ENCODE measurements at regions of chr10 and their contacts with region 1.

Region 1: GRCh38 chr10:86399879-86400704 is 33.5 kb upstream of the GRID1 start:
- DNase-seq: no peak
- H3K4me3 ChIP-seq: peak overlapping the region; percentile 52 to 60
- H3K27ac ChIP-seq: peak overlapping the region; percentile 82
- H3K4me1 ChIP-seq: peaks cover 33% of the 10 kb centered on the region
- H3K27me3 ChIP-seq: no peaks in the 10 kb centered on the region
- CTCF ChIP-seq: peak; percentile 88 to 95 (median 95)
- POLR2A ChIP-seq: no peak

Region 2: DNA sequence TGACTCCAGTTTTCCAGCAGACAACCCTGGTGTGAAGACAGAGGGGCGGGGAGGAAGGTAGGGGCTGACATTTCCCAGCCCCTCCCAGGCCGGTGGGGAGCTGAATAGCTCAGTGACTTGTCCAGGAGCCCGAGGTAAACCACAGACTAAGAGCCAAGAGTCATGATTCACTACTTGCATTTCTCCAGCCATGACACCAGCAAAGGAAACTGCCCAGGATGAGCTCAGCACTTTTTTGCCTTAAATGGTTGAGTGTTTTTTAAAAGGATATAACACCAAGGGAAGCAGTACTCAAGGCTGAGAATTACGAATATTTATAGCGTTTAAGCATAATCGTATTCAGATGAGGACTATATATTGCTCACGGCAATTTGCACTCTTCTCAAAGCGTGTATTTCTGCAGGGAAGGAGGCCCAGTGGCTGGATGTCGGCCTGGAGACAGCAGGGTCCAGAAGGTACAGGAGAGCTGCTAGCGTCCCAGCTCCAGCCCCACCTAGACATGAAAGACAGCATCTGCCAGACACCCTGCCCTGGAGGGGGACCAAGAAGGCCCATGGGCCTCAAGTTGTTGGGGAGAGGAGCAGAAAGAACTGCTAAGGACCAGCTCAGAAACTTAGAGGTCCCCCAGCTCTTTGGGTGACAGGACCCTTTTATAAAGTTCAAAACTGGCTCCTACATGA is 174.8 kb before region 1 on chr10:
- intact Hi-C with region 1: no loop called
- DNase-seq: no peak
- H3K4me3 ChIP-seq: no peak overlapping the region
- H3K27ac ChIP-seq: no peak overlapping the region
- H3K4me1 ChIP-seq: no peaks in the 10 kb centered on the region
- H3K27me3 ChIP-seq: no peaks in the 10 kb centered on the region
- CTCF ChIP-seq: no peak
- POLR2A ChIP-seq: no peak

Region 3: GRCh38 chr10:86321568-86321967 is 78.5 kb before region 1 on chr10:
- intact Hi-C with region 1: no loop called
- DNase-seq: no peak
- H3K4me3 ChIP-seq: no peak overlapping the region
- H3K27ac ChIP-seq: no peak overlapping the region
- H3K4me1 ChIP-seq: no peaks in the 10 kb centered on the region
- H3K27me3 ChIP-seq: no peaks in the 10 kb centered on the region
- CTCF ChIP-seq: no peak
- POLR2A ChIP-seq: no peak

Region 4: DNA sequence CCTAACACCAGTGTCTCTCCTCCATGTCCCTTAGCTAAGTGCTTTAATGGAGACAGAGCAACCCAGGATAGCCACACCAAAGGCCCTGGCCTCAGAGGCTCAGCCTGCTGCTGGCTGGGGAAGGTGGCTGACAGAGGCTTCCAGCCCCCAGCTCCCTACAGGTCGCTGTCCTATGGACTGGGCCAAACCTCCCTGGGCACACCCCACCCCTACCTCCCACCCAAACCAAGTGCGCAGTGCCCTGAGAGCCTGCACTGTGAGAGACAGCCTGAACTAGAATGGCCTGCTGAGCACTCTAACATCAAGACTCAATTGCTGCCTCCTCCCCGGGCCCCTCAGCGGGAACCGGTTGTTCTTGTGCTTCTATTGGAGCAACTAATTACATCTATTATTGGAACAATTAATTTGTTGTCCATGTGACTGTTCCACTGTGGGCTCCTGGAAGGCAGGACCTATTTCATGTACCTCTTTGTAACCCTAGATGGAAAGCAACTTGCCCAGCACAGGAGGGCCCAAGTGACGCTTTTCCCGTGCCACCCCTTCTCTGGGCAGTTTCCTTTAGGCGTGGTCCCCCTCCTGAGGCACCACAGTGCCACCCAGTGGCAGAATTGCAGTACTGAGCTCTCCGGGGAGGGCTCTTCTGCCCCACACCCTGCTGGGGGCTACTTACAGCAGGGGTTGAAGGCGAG is 185.1 kb after region 1 on chr10:
- intact Hi-C with region 1: loop called (anchors 10 kb)
- DNase-seq: no peak
- H3K4me3 ChIP-seq: peak overlapping the region in 1 of 2 donors; percentile 6
- H3K27ac ChIP-seq: no peak overlapping the region
- H3K4me1 ChIP-seq: peaks cover 7% of the 10 kb centered on the region
- H3K27me3 ChIP-seq: no peaks in the 10 kb centered on the region
- CTCF ChIP-seq: peak; percentile 66 to 92 (median 89)
- POLR2A ChIP-seq: no peak

Region 5: DNA sequence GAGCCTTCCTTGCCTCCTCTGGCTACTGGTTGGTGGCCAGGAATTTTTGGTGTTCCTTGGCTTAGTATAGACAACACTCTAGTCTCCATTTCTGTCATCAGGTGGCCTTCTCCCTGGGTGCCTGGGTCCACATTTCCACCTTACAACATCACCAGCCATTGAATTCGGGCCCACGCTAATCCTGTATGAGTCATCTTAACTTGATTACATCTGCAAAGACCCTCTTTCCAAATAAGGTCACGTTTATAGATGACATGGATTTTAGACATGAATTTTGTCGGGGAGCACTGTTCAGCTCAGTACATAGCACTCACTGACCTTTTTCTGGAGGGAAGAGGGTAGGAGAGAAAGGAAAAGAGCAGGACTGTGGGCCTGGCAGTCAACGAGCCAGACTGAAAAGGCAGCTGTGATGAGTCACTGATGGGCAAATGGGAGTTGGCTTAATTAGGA is 518.0 kb after region 1 on chr10:
- intact Hi-C with region 1: loop called (anchors 10 kb)
- DNase-seq: no peak
- H3K4me3 ChIP-seq: no peak overlapping the region
- H3K27ac ChIP-seq: no peak overlapping the region
- H3K4me1 ChIP-seq: no peaks in the 10 kb centered on the region
- H3K27me3 ChIP-seq: no peaks in the 10 kb centered on the region
- CTCF ChIP-seq: no peak
- POLR2A ChIP-seq: no peak